ENCODE measurements at regions of chr22 and their contacts with region 1.

Region 1: DNA sequence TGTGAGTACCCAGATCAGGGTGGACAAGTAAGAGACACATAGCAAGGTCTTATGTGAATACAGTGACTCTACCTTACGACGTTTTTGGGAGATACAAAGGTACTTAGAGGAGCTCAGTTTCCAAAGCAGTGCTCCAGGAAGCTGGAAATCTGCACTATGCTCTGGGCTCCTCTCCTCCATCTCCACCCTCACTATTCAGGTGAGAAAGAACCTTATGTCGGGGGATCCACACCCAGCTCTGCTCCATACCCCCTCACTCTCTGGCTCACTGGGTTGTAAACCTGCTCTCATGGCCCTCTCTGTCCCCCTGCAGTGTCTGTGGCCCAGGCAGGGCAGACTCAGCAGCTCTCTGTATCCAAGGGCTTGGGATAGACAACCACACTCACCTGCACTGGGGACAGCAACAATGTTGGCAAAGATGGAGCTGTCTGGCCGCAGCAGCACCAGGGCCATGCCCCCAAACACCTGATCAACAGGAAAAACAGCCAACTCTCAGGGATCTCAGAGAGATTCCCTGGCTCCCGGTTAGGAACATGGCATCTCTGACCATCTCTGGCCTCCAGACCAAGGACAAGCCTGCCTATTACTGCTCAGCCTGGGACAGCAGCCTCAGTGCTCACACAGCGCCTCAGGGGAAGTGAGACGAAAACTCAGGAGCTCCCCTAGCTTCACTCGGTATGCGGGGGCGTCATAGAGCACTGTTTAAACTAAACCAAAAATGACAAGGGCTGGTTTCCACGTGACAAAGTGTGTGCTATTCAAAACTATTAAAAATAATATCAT is 60.9 kb upstream of the TOP3B start:
- DNase-seq: peak; percentile 67
- CTCF ChIP-seq: no peak

Region 2: GRCh38 chr22:21881841-21882753 is 161.4 kb before region 1 on chr22:
- CTCF ChIA-PET with region 1: no interaction called
- POLR2A ChIA-PET with region 1: no interaction called
- DNase-seq: no peak
- CTCF ChIP-seq: no peak

Region 3: GRCh38 chr22:22030493-22031182 is 12.8 kb before region 1 on chr22:
- CTCF ChIA-PET with region 1: interaction called, 68 read pairs
- POLR2A ChIA-PET with region 1: no interaction called
- DNase-seq: peak; percentile 83
- CTCF ChIP-seq: peak; percentile 74

Region 4: GRCh38 chr22:22110548-22111266 is 67.2 kb after region 1 on chr22:
- CTCF ChIA-PET with region 1: interaction called, 11 read pairs
- POLR2A ChIA-PET with region 1: no interaction called
- DNase-seq: peak; percentile 87
- CTCF ChIP-seq: peak; percentile 56

Region 5: GRCh38 chr22:22156716-22157347 is 113.3 kb after region 1 on chr22:
- CTCF ChIA-PET with region 1: no interaction called
- POLR2A ChIA-PET with region 1: no interaction called
- DNase-seq: peak; percentile 87
- CTCF ChIP-seq: peak; percentile 65

Region 6: GRCh38 chr22:22215659-22216449 is 172.4 kb after region 1 on chr22:
- CTCF ChIA-PET with region 1: no interaction called
- POLR2A ChIA-PET with region 1: no interaction called
- DNase-seq: no peak
- CTCF ChIP-seq: no peak

Measured in GM10248 (cell line).